Activated CD8-positive, alpha-beta T cell treated with anti-CD3 and anti-CD28 coated beads, Interleukin-2, amount 10 ng/mL, durations not matched to agents 7 days and 5 days (primary cell): ENCODE measurements at regions of chr2 and their contacts with region 1.

Region 1: GRCh38 chr2:97806738-97807618 is 93.6 kb downstream of the ZAP70 start:
- DNase-seq: peak; percentile 84
- ATAC-seq: peak; percentile 95
- H3K4me3 Mint-ChIP-seq: no peak overlapping the region
- H3K27ac Mint-ChIP-seq: no peak overlapping the region
- H3K4me1 Mint-ChIP-seq: no peaks in the 10 kb centered on the region
- H3K27me3 Mint-ChIP-seq: no peaks in the 10 kb centered on the region

Region 2: DNA sequence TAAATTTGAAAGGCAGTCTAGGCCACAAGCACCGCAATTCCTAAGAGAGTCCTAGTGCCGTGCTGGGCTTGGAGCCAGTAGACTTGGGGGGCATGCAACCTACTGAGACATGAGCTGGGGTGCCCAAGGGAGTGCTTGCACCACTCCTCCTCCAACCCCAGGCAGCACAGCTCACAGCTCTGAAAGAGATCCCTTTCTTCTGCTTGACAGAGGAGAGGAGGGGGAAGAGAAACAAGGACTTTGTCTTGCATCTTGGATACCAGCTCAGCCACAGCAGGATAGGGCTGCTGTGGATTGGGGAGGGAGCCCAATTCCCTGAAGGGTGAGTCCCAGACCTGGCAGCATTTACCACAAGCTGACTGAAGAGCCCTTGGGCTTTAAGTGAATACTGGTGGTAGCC is 54.2 kb after region 1 on chr2:
- CTCF ChIA-PET with region 1: no interaction called
- POLR2A ChIA-PET with region 1: no interaction called
- DNase-seq: no peak
- ATAC-seq: no peak
- H3K4me3 Mint-ChIP-seq: no peak overlapping the region
- H3K27ac Mint-ChIP-seq: no peak overlapping the region
- H3K4me1 Mint-ChIP-seq: no peaks in the 10 kb centered on the region
- H3K27me3 Mint-ChIP-seq: no peaks in the 10 kb centered on the region

Region 3: GRCh38 chr2:98269274-98269673 is 462.3 kb after region 1 on chr2:
- CTCF ChIA-PET with region 1: interaction called, 20 read pairs
- POLR2A ChIA-PET with region 1: no interaction called
- DNase-seq: peak; percentile 30
- ATAC-seq: no peak
- H3K4me3 Mint-ChIP-seq: no peak overlapping the region
- H3K27ac Mint-ChIP-seq: no peak overlapping the region
- H3K4me1 Mint-ChIP-seq: no peaks in the 10 kb centered on the region
- H3K27me3 Mint-ChIP-seq: peaks cover 5% of the 10 kb centered on the region

Region 4: DNA sequence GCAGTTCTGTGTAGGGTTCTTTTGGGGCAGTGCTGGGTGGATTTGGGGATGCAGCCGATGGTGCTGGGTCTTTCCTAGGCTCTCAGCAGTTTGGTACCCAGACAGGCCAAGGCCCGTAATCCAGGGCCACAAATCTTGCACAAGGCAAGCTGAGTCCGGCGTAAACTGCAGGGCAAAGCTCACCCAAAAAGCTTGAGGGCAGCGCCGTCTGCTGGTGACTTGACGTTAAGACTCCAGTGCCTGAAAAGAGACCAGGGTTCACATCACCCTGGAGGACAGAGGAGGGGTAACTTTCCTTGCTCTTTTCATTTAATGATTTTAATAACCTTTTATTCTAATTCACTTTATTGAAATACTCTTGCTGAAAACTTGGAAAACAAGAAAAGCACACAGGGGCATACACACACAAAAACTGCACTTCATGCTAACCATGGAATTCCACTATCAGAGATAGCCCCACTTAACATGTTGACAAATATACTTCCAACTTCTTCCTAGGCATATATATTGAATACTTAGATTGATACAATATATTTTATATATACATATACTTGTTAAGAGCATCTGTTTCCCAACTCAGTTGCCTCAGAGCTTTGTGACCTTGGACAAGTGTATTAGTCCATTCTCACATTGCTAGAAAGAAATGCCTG is 578.2 kb after region 1 on chr2:
- CTCF ChIA-PET with region 1: interaction called, 24 read pairs
- POLR2A ChIA-PET with region 1: no interaction called
- DNase-seq: peak; percentile 82
- ATAC-seq: peak; percentile 95
- H3K4me3 Mint-ChIP-seq: no peak overlapping the region
- H3K27ac Mint-ChIP-seq: no peak overlapping the region
- H3K4me1 Mint-ChIP-seq: peaks cover 3% of the 10 kb centered on the region
- H3K27me3 Mint-ChIP-seq: peaks cover 5% of the 10 kb centered on the region